ENCODE measurements at regions of chr4 and their contacts with region 1.

Region 1: GRCh38 chr4:152734015-152734698 is 45.4 kb downstream of the TIGD4 start:
- DNase-seq: no peak
- H3K4me3 ChIP-seq: no peak overlapping the region
- H3K27ac ChIP-seq: no peak overlapping the region
- H3K4me1 ChIP-seq: no peaks in the 10 kb centered on the region
- H3K27me3 ChIP-seq: no peaks in the 10 kb centered on the region
- CTCF ChIP-seq: no peak
- POLR2A ChIP-seq: no peak

Region 2: GRCh38 chr4:152454398-152455011 is 279.7 kb before region 1 on chr4:
- intact Hi-C with region 1: loop called in 1 of 2 experiments (anchors 5 kb)
- DNase-seq: no peak
- H3K4me3 ChIP-seq: no peak overlapping the region
- H3K27ac ChIP-seq: no peak overlapping the region
- H3K4me1 ChIP-seq: no peaks in the 10 kb centered on the region
- H3K27me3 ChIP-seq: no peaks in the 10 kb centered on the region
- CTCF ChIP-seq: peak; percentile 33 to 69 (median 57)
- POLR2A ChIP-seq: no peak